ENCODE measurements at regions of chr13 and their contacts with region 1.

Region 1: DNA sequence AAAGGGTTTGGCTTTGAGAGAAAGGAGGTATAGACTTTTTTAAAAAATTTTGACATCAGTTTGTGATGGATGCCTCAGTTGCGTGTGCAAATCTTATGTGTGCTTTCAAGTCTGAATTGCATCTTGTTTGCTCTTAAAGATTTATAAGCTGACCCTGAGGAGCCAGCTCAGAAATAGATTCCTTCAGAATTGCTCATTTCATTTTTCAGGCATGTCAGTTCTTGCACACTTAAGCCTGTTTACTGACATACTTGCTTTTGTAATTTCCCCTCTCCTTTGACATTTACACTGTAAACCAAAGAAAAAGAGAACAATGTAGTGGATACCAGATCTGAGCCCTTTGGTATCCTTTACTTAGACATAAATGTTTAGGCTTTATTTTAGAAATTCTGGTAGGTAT is 87.6 kb downstream of the RNF17 start:
- DNase-seq: no peak
- ATAC-seq: no peak; the same call in 2 of the 3 replicates
- H3K4me3 ChIP-seq: no peak overlapping the region
- H3K27ac ChIP-seq: no peak overlapping the region
- H3K4me1 ChIP-seq: peaks cover 7% of the 10 kb centered on the region; the same call in 1 of the 2 replicates
- H3K27me3 ChIP-seq: no peaks in the 10 kb centered on the region
- CTCF ChIP-seq: no peak
- EP300 ChIP-seq: no peak
- POLR2A ChIP-seq: no peak
- RAD21 ChIP-seq: no peak

Region 2: DNA sequence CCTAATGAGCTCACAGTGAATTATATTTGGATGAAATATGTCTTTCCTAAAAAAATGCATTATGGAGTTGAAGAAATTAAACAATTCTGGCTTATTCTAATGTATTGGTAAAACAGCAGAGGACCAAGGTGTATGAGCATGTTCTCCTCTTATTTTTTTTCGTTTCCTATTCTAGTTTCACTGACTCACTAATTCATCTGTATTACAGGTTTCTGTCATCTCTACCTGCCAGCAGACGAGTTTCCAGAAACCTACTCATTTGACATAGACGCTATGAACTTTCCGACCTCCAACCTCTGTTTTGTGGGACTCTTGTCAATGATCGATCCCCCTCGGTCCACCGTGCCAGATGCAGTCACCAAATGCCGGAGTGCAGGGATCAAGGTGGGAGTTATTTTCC is 151.0 kb before region 1 on chr13:
- CTCF ChIA-PET with region 1: no interaction called
- POLR2A ChIA-PET with region 1: no interaction called
- RAD21 ChIA-PET with region 1: no interaction called
- SMC1A ChIA-PET with region 1: no interaction called
- in situ Hi-C with region 1: no loop called
- intact Hi-C with region 1: no loop called
- DNase-seq: no peak
- ATAC-seq: no peak
- H3K4me3 ChIP-seq: no peak overlapping the region
- H3K27ac ChIP-seq: no peak overlapping the region
- H3K4me1 ChIP-seq: no peaks in the 10 kb centered on the region
- H3K27me3 ChIP-seq: peaks cover 0 to 2% of the 10 kb centered on the region in 2 experiments; a peak in 1 of 4 replicates
- CTCF ChIP-seq: no peak
- EP300 ChIP-seq: no peak
- POLR2A ChIP-seq: no peak
- RAD21 ChIP-seq: no peak

Region 3: GRCh38 chr13:24982333-24982999 is 130.9 kb after region 1 on chr13:
- CTCF ChIA-PET with region 1: no interaction called
- POLR2A ChIA-PET with region 1: no interaction called
- RAD21 ChIA-PET with region 1: no interaction called
- SMC1A ChIA-PET with region 1: interaction called, 3 read pairs
- in situ Hi-C with region 1: no loop called
- intact Hi-C with region 1: loop called (anchors 10 kb)
- DNase-seq: no peak
- ATAC-seq: no peak
- H3K4me3 ChIP-seq: no peak overlapping the region
- H3K27ac ChIP-seq: no peak overlapping the region
- H3K4me1 ChIP-seq: no peaks in the 10 kb centered on the region
- H3K27me3 ChIP-seq: peaks cover 2 to 6% of the 10 kb centered on the region in 2 experiments; a peak in 2 of 4 replicates
- CTCF ChIP-seq: no peak
- EP300 ChIP-seq: no peak
- POLR2A ChIP-seq: no peak
- RAD21 ChIP-seq: no peak

Measured in GM12878 (cell line).